CD8-positive, alpha-beta T cell (primary cell): ENCODE measurements at regions of chr10 and their contacts with region 1.

Region 1: DNA sequence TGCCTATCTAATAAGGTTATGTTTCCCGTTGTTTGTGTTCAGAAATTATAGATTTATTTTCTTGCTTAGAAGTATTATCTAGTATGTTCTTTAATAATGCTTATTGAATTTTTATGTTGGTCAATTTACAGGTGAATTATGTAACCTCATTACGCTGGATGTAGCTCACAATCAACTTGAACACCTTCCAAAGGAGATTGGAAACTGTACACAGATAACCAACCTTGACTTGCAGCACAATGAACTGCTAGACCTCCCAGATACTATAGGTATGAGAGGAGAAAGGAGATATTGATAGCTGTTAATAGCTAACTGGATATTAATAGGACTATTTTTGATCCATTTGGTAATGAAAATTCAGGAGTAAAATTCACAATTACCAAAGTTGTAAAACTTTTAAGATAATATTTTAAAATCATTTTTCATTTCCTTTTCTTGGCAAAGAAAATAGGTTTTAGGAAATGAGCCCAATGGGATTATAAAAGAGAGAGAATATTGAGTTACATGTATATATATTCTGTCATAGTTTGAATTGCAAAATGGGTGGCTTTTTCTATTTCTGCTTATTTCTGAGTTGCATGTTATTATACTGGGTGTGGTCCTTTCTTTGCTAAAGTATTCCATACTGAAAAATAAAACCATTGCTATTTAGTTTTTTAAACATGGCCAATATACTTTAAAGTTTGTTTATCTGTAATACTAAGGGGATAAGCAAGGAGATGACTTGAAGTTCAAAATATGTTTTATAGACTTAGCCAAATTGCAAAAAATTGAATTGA is 66.3 kb downstream of the SHOC2 start:
- DNase-seq: no peak
- ATAC-seq: no peak
- H3K4me3 ChIP-seq: no peak overlapping the region
- H3K4me3 Mint-ChIP-seq: no peak overlapping the region
- H3K27ac ChIP-seq: no peak overlapping the region
- H3K27ac Mint-ChIP-seq: no peak overlapping the region
- H3K4me1 ChIP-seq: peaks cover 6% of the 10 kb centered on the region
- H3K4me1 Mint-ChIP-seq: peaks cover 33% of the 10 kb centered on the region
- H3K27me3 ChIP-seq: no peaks in the 10 kb centered on the region
- H3K27me3 Mint-ChIP-seq: no peaks in the 10 kb centered on the region
- CTCF ChIP-seq: no peak

Region 2: DNA sequence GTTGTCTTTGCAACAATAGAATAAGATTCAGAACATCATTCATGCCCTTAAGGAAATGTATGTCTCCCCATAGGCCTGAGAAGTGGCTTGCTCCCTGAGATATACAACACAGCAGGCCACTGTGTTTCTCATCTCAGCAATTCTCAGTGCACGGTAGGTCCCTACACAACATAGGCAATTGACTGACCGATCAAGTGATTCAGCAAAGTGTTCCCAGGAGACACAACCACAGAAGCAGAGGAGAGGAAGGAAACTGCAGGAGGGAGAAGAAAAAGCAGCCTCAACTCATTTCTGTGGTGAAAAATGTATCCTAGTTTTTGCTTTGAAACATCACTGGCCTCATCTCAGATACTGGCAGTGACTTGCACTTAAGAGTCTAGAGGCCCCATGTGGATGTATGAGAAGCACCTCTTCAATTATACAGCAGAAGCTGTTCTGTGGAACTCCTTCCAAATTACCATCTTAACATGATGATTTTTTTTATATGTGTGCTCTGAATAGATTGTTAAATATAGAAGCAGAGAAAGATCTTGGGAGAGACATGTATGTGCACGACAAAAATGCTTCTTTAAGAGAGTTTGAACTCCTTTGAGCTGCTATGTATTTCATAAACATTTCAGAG is 1369.2 kb before region 1 on chr10:
- CTCF ChIA-PET with region 1: no interaction called
- POLR2A ChIA-PET with region 1: no interaction called
- intact Hi-C with region 1: no loop called
- DNase-seq: no peak
- ATAC-seq: no peak
- H3K4me3 ChIP-seq: no peak overlapping the region
- H3K4me3 Mint-ChIP-seq: no peak overlapping the region
- H3K27ac ChIP-seq: no peak overlapping the region
- H3K27ac Mint-ChIP-seq: no peak overlapping the region
- H3K4me1 ChIP-seq: no peaks in the 10 kb centered on the region
- H3K4me1 Mint-ChIP-seq: no peaks in the 10 kb centered on the region
- H3K27me3 ChIP-seq: no peaks in the 10 kb centered on the region
- H3K27me3 Mint-ChIP-seq: peaks cover 4% of the 10 kb centered on the region
- CTCF ChIP-seq: no peak

Region 3: DNA sequence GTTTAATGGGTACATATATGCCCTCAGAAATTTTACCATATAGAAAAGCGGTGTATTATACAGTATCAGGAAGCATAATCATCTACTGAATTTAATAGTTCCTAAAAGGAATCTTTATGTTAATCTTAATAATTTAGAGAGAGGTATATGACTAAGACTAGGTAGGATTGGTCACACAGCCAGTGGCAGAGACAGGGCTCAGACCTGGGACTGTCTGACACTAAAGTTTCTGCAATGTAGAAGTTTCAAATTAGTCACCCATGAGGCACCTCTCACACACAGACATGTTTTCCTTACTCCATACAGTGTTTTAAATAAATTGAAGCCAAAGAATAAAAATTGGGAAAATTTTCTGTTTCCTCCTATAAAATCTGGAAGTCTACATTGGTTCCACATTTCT is 18.3 kb after region 1 on chr10:
- CTCF ChIA-PET with region 1: no interaction called
- POLR2A ChIA-PET with region 1: no interaction called
- intact Hi-C with region 1: loop called in 1 of 2 experiments (anchors 2 kb)
- DNase-seq: no peak
- ATAC-seq: no peak
- H3K4me3 ChIP-seq: no peak overlapping the region
- H3K4me3 Mint-ChIP-seq: no peak overlapping the region
- H3K27ac ChIP-seq: no peak overlapping the region
- H3K27ac Mint-ChIP-seq: no peak overlapping the region
- H3K4me1 ChIP-seq: no peaks in the 10 kb centered on the region
- H3K4me1 Mint-ChIP-seq: no peaks in the 10 kb centered on the region
- H3K27me3 ChIP-seq: no peaks in the 10 kb centered on the region
- H3K27me3 Mint-ChIP-seq: no peaks in the 10 kb centered on the region
- CTCF ChIP-seq: no peak